Gastrocnemius medialis (tissue), 4 donors: ENCODE measurements at regions of chr10 and their contacts with region 1.

Region 1: GRCh38 chr10:102776779-102777456 is 33.2 kb downstream of the WBP1L start:
- DNase-seq: peak; percentile 97 to 98
- ATAC-seq: peak; percentile 46 to 51
- H3K4me3 ChIP-seq: peak overlapping the region; percentile 65 to 78 (median 70)
- H3K27ac ChIP-seq: peak overlapping the region; percentile 91 to 100 (median 96)
- H3K4me1 ChIP-seq: peaks cover 72 to 80% of the 10 kb centered on the region in 2 donors
- H3K27me3 ChIP-seq: no peaks in the 10 kb centered on the region
- CTCF ChIP-seq: peak in 1 of 5 experiments; percentile 8
- POLR2A ChIP-seq: peak in 1 of 2 donors; percentile 90

Region 2: GRCh38 chr10:101287997-101288635 is 1488.8 kb before region 1 on chr10:
- in situ Hi-C with region 1: no loop called
- intact Hi-C with region 1: no loop called
- DNase-seq: no peak
- ATAC-seq: no peak
- H3K4me3 ChIP-seq: no peak overlapping the region
- H3K27ac ChIP-seq: no peak overlapping the region
- H3K4me1 ChIP-seq: peaks cover 0 to 5% of the 10 kb centered on the region in 2 donors
- H3K27me3 ChIP-seq: peaks cover 16 to 17% (median 16%) of the 10 kb centered on the region in 3 donors
- CTCF ChIP-seq: no peak
- POLR2A ChIP-seq: no peak

Region 3: GRCh38 chr10:102523250-102524029 is 253.5 kb before region 1 on chr10:
- in situ Hi-C with region 1: no loop called
- intact Hi-C with region 1: no loop called
- DNase-seq: no peak
- ATAC-seq: no peak
- H3K4me3 ChIP-seq: no peak overlapping the region
- H3K27ac ChIP-seq: no peak overlapping the region
- H3K4me1 ChIP-seq: no peaks in the 10 kb centered on the region
- H3K27me3 ChIP-seq: no peaks in the 10 kb centered on the region
- CTCF ChIP-seq: no peak
- POLR2A ChIP-seq: no peak

Region 4: GRCh38 chr10:102652170-102652916 is 124.6 kb before region 1 on chr10:
- in situ Hi-C with region 1: no loop called
- intact Hi-C with region 1: no loop called
- DNase-seq: no peak
- ATAC-seq: no peak
- H3K4me3 ChIP-seq: no peak overlapping the region
- H3K27ac ChIP-seq: peak overlapping the region in 2 of 4 donors; percentile 46 to 100
- H3K4me1 ChIP-seq: peaks cover 46 to 50% of the 10 kb centered on the region in 2 donors
- H3K27me3 ChIP-seq: no peaks in the 10 kb centered on the region
- CTCF ChIP-seq: no peak
- POLR2A ChIP-seq: no peak

Region 5: GRCh38 chr10:102796407-102797176 is 19.7 kb after region 1 on chr10:
- in situ Hi-C with region 1: no loop called
- intact Hi-C with region 1: loop called (anchors 1 kb)
- DNase-seq: peak; percentile 95 to 97
- ATAC-seq: peak; percentile 71 to 82
- H3K4me3 ChIP-seq: peak overlapping the region in 3 of 4 donors; percentile 5 to 30 (median 22)
- H3K27ac ChIP-seq: peak overlapping the region; percentile 91 to 100 (median 96)
- H3K4me1 ChIP-seq: peaks cover 98 to 99% of the 10 kb centered on the region in 2 donors
- H3K27me3 ChIP-seq: no peaks in the 10 kb centered on the region
- CTCF ChIP-seq: no peak
- POLR2A ChIP-seq: peak; percentile 86 to 88

Region 6: GRCh38 chr10:102802920-102803534 is 26.1 kb after region 1 on chr10:
- in situ Hi-C with region 1: no loop called
- intact Hi-C with region 1: loop called (anchors 1 kb)
- DNase-seq: peak in 1 of 2 donors; percentile 39
- ATAC-seq: peak in 1 of 2 donors; percentile 12
- H3K4me3 ChIP-seq: no peak overlapping the region
- H3K27ac ChIP-seq: peak overlapping the region; percentile 77 to 100 (median 92)
- H3K4me1 ChIP-seq: peaks cover 70% of the 10 kb centered on the region in 2 donors
- H3K27me3 ChIP-seq: no peaks in the 10 kb centered on the region
- CTCF ChIP-seq: no peak
- POLR2A ChIP-seq: no peak